ENCODE measurements at regions of chr7 and their contacts with region 1.

Region 1: GRCh38 chr7:80699045-80699638 is 60.7 kb downstream of the CD36 start:
- DNase-seq: no peak
- ATAC-seq: peak in 7 of 8 donors; percentile 47 to 80 (median 73)
- H3K4me3 ChIP-seq: no peak overlapping the region
- H3K27ac ChIP-seq: no peak overlapping the region
- H3K4me1 ChIP-seq: peaks cover 0 to 11% (median 5%) of the 10 kb centered on the region in 9 donors
- H3K27me3 ChIP-seq: no peaks in the 10 kb centered on the region
- CTCF ChIP-seq: peak; percentile 50 to 84 (median 71)

Region 2: DNA sequence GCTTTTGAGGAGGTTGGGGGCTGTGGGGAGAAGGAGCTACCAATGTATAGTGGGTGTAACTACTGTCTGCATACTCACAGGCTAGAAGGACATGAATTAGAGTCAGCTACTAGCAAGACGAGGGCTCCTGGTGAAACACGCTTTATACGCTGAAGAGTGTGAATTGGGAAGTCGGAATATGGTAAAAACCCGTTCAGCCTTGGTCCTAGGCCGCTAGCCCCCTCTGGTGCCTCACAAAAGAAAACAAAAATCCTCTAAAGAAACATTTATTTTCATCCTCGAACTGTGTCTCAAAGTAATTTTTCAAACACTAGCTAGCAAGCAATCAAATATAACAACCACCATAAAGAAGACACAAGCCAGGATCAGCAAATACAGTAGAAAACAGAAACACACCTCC is 557.8 kb after region 1 on chr7:
- intact Hi-C with region 1: loop called in 8 of 10 experiments (anchors 1 to 5 kb)
- DNase-seq: peak in 1 of 2 donors; percentile 17
- ATAC-seq: peak in 6 of 8 donors; percentile 39 to 67 (median 64)
- H3K4me3 ChIP-seq: no peak overlapping the region
- H3K27ac ChIP-seq: no peak overlapping the region
- H3K4me1 ChIP-seq: no peaks in the 10 kb centered on the region
- H3K27me3 ChIP-seq: no peaks in the 10 kb centered on the region
- CTCF ChIP-seq: peak; percentile 13 to 58 (median 40)

Region 3: GRCh38 chr7:81457852-81458522 is 758.8 kb after region 1 on chr7:
- intact Hi-C with region 1: loop called in 6 of 10 experiments (anchors 5 to 10 kb)
- DNase-seq: no peak
- ATAC-seq: no peak
- H3K4me3 ChIP-seq: no peak overlapping the region
- H3K27ac ChIP-seq: no peak overlapping the region
- H3K4me1 ChIP-seq: no peaks in the 10 kb centered on the region
- H3K27me3 ChIP-seq: no peaks in the 10 kb centered on the region
- CTCF ChIP-seq: peak in 7 of 9 donors; percentile 19 to 53 (median 38)

Region 4: GRCh38 chr7:81469869-81470723 is 771.0 kb after region 1 on chr7:
- intact Hi-C with region 1: loop called in 9 of 10 experiments (anchors 1 to 10 kb)
- DNase-seq: peak; percentile 54 to 69
- ATAC-seq: peak; percentile 77 to 93 (median 86)
- H3K4me3 ChIP-seq: peak overlapping the region in 2 of 10 donors; percentile 3 to 12
- H3K27ac ChIP-seq: peak overlapping the region in 4 of 10 donors; percentile 12 to 27 (median 20)
- H3K4me1 ChIP-seq: peaks cover 0 to 16% (median 0%) of the 10 kb centered on the region in 9 donors
- H3K27me3 ChIP-seq: no peaks in the 10 kb centered on the region
- CTCF ChIP-seq: peak; percentile 26 to 77 (median 67)